Activated CD8-positive, alpha-beta T cell treated with anti-CD3 and anti-CD28 coated beads for 36 hours (primary cell): ENCODE measurements at regions of chr12 and their contacts with region 1.

Region 1: GRCh38 chr12:52221912-52222457 is 11.1 kb upstream of the KRT7 start:
- DNase-seq: peak; percentile 92
- ATAC-seq: peak; percentile 95
- H3K4me3 Mint-ChIP-seq: no peak overlapping the region
- H3K27ac Mint-ChIP-seq: no peak overlapping the region
- H3K4me1 Mint-ChIP-seq: peaks cover 15% of the 10 kb centered on the region
- H3K27me3 Mint-ChIP-seq: peaks cover 30% of the 10 kb centered on the region
- CTCF ChIP-seq: peak; percentile 63

Region 2: DNA sequence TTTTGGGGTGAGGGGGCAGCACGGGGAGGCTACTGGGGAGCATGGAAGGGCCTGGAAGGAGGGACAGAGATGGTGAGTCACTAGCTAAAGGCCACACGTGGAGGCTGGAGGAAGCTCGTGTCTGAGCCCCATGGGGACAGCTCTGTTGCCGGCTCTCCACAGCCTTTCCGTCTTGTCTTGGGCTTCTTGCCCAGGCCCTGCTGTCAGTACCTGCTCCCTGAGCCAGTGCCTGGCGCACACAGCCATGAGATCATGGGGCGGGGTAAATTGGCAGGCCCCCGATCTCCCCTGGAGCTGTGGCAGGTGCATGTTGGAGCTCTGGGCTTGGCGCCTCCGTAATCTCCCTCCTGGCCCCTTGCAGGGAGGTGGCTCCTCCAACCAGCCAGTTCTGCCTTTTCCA is 14.1 kb before region 1 on chr12:
- CTCF ChIA-PET with region 1: interaction called, 11 read pairs
- POLR2A ChIA-PET with region 1: no interaction called
- intact Hi-C with region 1: no loop called
- DNase-seq: no peak
- ATAC-seq: no peak
- H3K4me3 Mint-ChIP-seq: no peak overlapping the region
- H3K27ac Mint-ChIP-seq: no peak overlapping the region
- H3K4me1 Mint-ChIP-seq: peaks cover 3% of the 10 kb centered on the region
- H3K27me3 Mint-ChIP-seq: peaks cover 4% of the 10 kb centered on the region
- CTCF ChIP-seq: no peak

Region 3: GRCh38 chr12:52235822-52236692 is 14.1 kb after region 1 on chr12:
- CTCF ChIA-PET with region 1: interaction called, 33 read pairs
- POLR2A ChIA-PET with region 1: interaction called, 3 read pairs
- intact Hi-C with region 1: no loop called
- DNase-seq: no peak
- ATAC-seq: no peak
- H3K4me3 Mint-ChIP-seq: no peak overlapping the region
- H3K27ac Mint-ChIP-seq: no peak overlapping the region
- H3K4me1 Mint-ChIP-seq: no peaks in the 10 kb centered on the region
- H3K27me3 Mint-ChIP-seq: peaks cover 31% of the 10 kb centered on the region
- CTCF ChIP-seq: no peak